Upper lobe of right lung (tissue), 1 donor: ENCODE measurements at regions of chr3 and their contacts with region 1.

Region 1: DNA sequence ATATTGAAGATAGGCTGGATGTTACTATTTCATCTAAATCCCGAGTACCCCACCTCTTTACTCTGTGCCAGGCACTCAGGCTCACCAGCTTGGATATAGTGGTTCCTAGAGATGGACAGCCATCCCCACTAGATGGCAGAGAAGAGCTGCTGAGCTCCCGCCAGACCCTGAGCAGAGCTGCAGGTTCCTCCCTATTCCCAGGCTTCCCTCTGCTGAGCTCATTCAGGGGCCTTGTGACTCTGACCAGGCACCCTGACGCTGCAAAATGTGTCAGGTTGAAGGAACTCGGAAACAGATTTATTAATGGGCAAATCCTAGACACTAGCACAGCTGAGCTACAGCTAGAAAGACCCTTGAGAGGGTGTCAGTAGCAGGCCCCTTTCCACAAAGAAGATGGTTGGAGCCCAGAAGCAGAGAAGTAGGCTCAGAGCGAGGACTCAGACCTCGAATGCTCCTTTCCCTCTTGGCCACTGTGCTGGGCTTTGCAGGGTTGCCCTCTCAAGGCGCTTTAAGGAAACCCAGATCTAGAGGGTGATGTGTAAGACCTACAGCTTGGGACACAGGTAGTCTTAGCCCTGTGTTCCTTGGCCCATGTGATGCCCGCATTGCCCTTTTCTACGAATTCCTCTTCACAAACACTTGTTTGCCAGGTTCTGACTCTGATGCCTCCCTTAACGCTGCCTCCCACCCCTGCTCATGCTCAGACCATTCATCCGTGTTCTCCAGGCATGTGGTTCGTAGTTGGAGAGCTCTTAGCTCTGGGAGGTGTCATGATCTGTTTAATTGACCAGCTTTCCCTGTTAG is 38.0 kb upstream of the RHO start:
- DNase-seq: peak; percentile 86
- ATAC-seq: peak; percentile 94
- H3K4me3 ChIP-seq: no peak overlapping the region
- H3K27ac ChIP-seq: peak overlapping the region; percentile 79
- H3K4me1 ChIP-seq: peaks cover 24% of the 10 kb centered on the region
- H3K27me3 ChIP-seq: no peaks in the 10 kb centered on the region
- CTCF ChIP-seq: peak; percentile 92

Region 2: DNA sequence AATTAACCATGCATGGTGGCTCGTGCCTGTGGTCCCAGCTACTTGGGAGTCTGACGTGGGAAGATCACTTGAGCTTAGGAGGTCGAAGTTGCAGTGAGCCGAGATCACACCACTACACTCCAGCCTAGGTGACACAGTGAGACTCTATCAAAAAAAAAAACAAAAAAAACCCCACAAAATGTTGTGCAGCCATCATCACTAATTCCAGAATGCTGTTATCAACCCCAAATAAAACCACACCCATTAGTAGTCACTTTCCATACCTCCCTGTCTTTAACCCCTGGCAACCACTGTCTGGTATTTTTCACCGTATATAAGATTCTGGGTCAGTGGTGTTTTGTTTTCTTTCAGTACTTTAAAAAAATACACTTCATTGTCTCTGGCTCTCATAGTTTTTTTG is 195.2 kb before region 1 on chr3:
- intact Hi-C with region 1: no loop called
- DNase-seq: no peak
- ATAC-seq: no peak
- H3K4me3 ChIP-seq: no peak overlapping the region
- H3K27ac ChIP-seq: no peak overlapping the region
- H3K4me1 ChIP-seq: no peaks in the 10 kb centered on the region
- H3K27me3 ChIP-seq: no peaks in the 10 kb centered on the region
- CTCF ChIP-seq: no peak

Region 3: DNA sequence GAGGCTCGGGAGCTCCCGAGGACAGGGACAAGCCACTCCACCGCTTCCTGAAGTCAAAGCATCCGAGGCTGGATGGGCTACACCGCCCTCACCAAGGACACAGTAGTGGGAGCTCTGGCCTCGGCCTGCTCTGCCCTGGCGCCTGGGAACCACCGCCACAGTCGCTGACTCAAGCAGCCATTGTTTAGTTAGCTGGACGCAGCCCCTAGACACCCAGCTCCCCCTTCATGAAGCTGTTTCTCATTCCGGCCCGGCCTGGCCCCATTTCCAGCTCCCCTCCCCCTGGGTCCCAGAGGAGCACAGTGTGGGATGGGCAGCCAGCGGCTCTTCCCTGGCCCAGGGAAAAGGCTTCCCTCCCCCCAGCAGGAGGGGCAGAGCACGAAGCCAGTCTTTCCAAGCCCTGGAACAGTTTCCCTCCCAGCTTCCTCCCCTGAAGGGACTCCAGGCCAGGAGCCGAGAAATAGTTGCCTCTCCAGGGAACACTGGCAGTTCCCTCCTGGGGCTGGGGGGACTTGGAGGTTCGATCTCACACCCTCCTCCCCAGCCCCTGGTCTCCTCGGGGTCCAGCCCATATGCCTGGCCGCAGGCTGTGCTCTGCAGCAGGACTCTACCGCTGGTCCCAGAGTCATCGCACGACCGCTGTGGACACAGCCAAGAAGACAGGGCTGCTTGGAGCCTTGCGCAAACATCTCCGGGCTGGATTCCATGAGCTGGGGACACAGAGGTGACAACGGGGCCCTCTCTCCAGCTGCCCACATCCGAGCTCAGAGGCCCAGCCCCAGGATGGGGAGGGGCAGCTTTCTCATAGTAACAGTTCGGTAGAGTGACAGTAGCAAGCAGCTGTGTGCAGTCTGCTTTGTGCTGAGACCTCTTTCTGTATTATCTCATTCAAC is 106.0 kb after region 1 on chr3:
- intact Hi-C with region 1: loop called (anchors 10 kb)
- DNase-seq: peak; percentile 88
- ATAC-seq: peak; percentile 58
- H3K4me3 ChIP-seq: peak overlapping the region; percentile 28
- H3K27ac ChIP-seq: peak overlapping the region; percentile 84
- H3K4me1 ChIP-seq: peaks cover 100% of the 10 kb centered on the region
- H3K27me3 ChIP-seq: no peaks in the 10 kb centered on the region
- CTCF ChIP-seq: peak; percentile 6